PC-9 (cell line): ENCODE measurements at regions of chr2 and their contacts with region 1.

Region 1: GRCh38 chr2:174697255-174697654 is 67.0 kb downstream of the CHRNA1 start:
- DNase-seq: peak in 1 of 2 experiments; percentile 59
- H3K4me3 ChIP-seq: no peak overlapping the region
- H3K27ac ChIP-seq: no peak overlapping the region
- H3K4me1 ChIP-seq: no peaks in the 10 kb centered on the region
- H3K27me3 ChIP-seq: no peaks in the 10 kb centered on the region
- CTCF ChIP-seq: peak; percentile 84

Region 2: GRCh38 chr2:174383796-174384195 is 313.5 kb before region 1 on chr2:
- CTCF ChIA-PET with region 1: no interaction called
- POLR2A ChIA-PET with region 1: no interaction called
- intact Hi-C with region 1: no loop called
- DNase-seq: no peak
- H3K4me3 ChIP-seq: no peak overlapping the region
- H3K27ac ChIP-seq: no peak overlapping the region
- H3K4me1 ChIP-seq: no peaks in the 10 kb centered on the region
- H3K27me3 ChIP-seq: no peaks in the 10 kb centered on the region
- CTCF ChIP-seq: no peak

Region 3: GRCh38 chr2:174729797-174730697 is 32.8 kb after region 1 on chr2:
- CTCF ChIA-PET with region 1: no interaction called
- POLR2A ChIA-PET with region 1: no interaction called
- intact Hi-C with region 1: no loop called
- DNase-seq: no peak
- H3K4me3 ChIP-seq: no peak overlapping the region
- H3K27ac ChIP-seq: no peak overlapping the region
- H3K4me1 ChIP-seq: no peaks in the 10 kb centered on the region
- H3K27me3 ChIP-seq: no peaks in the 10 kb centered on the region
- CTCF ChIP-seq: no peak

Region 4: DNA sequence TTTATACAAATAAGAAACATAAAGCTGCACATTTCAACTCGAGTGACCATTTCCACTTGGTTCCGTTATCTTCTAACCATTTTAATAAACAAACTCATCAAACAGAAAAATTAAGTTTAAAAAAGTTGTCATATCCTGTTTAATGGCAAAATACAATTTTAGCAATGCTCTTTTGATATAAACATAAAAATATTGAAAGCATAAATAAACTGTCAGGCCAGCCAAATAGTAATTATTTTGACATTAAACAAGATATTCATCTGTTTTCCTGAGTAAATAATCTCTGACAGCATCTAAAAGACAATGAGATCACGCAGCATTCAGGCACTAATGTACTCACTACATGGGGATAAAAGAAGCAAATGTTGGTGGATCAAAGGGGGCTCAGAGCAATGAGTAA is 629.5 kb after region 1 on chr2:
- CTCF ChIA-PET with region 1: no interaction called
- POLR2A ChIA-PET with region 1: no interaction called
- intact Hi-C with region 1: loop called (anchors 2 kb)
- DNase-seq: no peak
- H3K4me3 ChIP-seq: no peak overlapping the region
- H3K27ac ChIP-seq: no peak overlapping the region
- H3K4me1 ChIP-seq: no peaks in the 10 kb centered on the region
- H3K27me3 ChIP-seq: peaks cover 39% of the 10 kb centered on the region; the same call in 1 of the 2 replicates
- CTCF ChIP-seq: no peak

Region 5: GRCh38 chr2:175684457-175684856 is 987.2 kb after region 1 on chr2:
- CTCF ChIA-PET with region 1: no interaction called
- POLR2A ChIA-PET with region 1: no interaction called
- intact Hi-C with region 1: loop called (anchors 10 kb)
- DNase-seq: no peak
- H3K4me3 ChIP-seq: no peak overlapping the region
- H3K27ac ChIP-seq: no peak overlapping the region
- H3K4me1 ChIP-seq: no peaks in the 10 kb centered on the region
- H3K27me3 ChIP-seq: peaks cover 57% of the 10 kb centered on the region
- CTCF ChIP-seq: no peak